Posterior vena cava (tissue), 2 donors: ENCODE measurements at regions of chr13 and their contacts with region 1.

Region 1: GRCh38 chr13:85137516-85137915 is 661.7 kb downstream of the SLITRK6 start:
- DNase-seq: no peak

Region 2: DNA sequence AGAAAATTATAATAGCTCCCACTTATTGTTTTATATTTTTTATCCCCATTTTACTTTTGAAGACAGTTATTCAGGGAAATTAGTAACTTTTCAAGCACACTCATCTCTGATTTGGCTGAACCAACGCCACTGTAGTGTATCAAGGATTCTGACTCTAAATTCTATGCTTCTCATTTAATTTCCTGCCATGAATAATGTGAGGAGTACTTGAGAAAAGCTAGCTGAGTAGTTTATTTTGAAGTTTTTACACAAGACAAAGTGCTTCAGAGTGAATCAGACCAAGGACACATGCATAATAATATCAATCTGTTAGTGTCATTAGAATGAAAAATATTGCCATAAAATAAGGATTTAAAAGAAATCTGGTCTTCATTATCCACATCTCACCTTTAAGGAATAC is 331.8 kb after region 1 on chr13:
- intact Hi-C with region 1: loop called in 1 of 2 experiments (anchors 5 kb)
- DNase-seq: no peak

Region 3: DNA sequence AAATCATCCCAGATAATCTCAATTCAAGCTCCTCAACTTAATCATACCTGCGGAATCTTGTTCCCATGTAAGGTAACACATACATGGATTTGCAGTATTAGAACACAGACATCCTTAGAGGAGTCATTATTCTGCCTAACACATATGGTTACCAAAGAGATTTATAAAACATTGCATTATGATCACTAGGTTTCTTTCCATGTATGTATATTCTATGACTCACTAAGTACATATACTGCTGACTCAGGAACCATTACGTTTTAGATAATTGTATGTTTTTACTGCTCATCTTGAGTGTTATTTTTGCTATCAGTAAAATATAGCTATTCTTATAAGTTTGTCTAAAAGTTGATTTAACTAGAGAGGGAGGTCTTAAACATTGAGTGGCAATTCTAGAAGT is 478.8 kb after region 1 on chr13:
- intact Hi-C with region 1: no loop called
- DNase-seq: no peak